PC-9 (cell line): ENCODE measurements at regions of chr2 and their contacts with region 1.

Region 1: DNA sequence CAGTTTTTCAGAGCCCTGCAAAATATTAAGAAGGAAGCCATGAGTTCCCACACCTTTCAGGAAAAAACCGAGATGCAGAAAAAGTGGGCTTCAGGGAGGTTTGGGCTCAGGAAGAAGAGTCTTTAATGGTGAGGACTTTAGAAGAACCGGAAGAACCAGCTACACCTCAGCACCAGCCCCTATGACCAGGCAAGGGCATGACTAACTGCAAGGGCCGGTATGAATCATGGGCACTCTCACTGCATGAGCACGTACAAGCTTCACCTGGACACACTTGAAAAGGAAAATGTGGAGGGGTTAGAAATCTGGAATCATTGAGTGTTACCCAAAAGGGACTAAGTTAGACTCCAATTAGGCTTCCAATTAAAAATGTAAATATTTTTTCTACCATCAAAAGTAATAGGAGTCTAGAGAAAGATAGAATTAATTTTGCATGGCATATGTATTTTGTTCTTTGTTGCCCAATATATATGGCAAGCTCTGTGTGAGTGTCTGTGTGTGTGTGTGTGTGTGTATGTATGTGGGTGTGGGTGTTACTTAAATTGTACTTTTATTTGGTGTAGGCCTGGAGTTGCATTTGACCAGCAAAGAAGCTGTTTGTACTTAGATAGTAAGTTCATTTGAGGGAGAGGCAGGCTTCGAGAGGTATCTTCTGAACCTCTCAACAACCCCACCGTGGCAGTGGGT is 66.5 kb upstream of the THUMPD2 start:
- DNase-seq: peak; percentile 70 to 96
- H3K4me3 ChIP-seq: peak overlapping the region; percentile 7; the same call in 1 of the 2 replicates
- H3K27ac ChIP-seq: peak overlapping the region; percentile 45
- H3K4me1 ChIP-seq: peaks cover 16% of the 10 kb centered on the region
- H3K27me3 ChIP-seq: no peaks in the 10 kb centered on the region
- CTCF ChIP-seq: no peak

Region 2: GRCh38 chr2:39608686-39609441 is 236.7 kb before region 1 on chr2:
- CTCF ChIA-PET with region 1: no interaction called
- POLR2A ChIA-PET with region 1: no interaction called
- intact Hi-C with region 1: no loop called
- DNase-seq: no peak
- H3K4me3 ChIP-seq: no peak overlapping the region
- H3K27ac ChIP-seq: no peak overlapping the region
- H3K4me1 ChIP-seq: no peaks in the 10 kb centered on the region
- H3K27me3 ChIP-seq: no peaks in the 10 kb centered on the region
- CTCF ChIP-seq: no peak

Region 3: DNA sequence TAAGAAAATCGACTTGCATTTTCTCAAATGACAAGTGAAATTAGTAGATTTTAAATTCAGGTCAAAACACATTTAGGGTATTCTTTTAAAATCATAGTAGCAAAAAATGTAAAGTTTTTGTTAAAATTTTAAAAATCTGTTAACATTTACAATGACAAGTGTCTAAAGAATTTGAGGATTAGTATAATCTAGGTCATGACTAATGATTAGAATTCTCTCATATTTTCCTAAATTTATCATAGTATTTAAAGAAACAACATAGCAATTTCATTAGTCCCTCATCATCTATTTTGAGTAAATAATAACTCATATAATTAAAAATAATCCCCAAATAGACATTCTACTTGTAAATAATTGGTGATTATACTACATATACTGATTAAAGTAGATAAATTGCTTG is 90.1 kb before region 1 on chr2:
- CTCF ChIA-PET with region 1: no interaction called
- POLR2A ChIA-PET with region 1: no interaction called
- intact Hi-C with region 1: no loop called
- DNase-seq: no peak
- H3K4me3 ChIP-seq: no peak overlapping the region
- H3K27ac ChIP-seq: no peak overlapping the region
- H3K4me1 ChIP-seq: no peaks in the 10 kb centered on the region
- H3K27me3 ChIP-seq: no peaks in the 10 kb centered on the region
- CTCF ChIP-seq: no peak

Region 4: DNA sequence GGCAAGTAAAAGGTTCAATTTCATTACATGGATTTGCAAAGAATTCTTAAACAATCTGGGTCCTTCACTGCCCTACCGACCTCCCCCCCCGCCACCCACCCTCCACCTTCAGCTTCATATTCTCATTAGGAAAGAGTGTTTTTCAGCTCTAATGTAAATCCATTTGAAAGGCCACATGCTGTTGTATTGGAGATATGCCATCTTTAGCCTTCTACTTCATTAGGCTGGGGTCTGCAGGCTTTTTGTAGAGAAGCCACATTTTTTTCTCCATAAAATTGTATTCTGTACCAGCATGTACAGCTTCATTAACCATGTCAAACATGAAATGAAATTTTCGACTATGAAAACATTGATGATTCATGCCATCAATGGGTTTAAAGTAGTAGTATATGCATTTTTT is 23.7 kb before region 1 on chr2:
- CTCF ChIA-PET with region 1: no interaction called
- POLR2A ChIA-PET with region 1: no interaction called
- intact Hi-C with region 1: no loop called
- DNase-seq: no peak
- H3K4me3 ChIP-seq: no peak overlapping the region
- H3K27ac ChIP-seq: no peak overlapping the region
- H3K4me1 ChIP-seq: no peaks in the 10 kb centered on the region
- H3K27me3 ChIP-seq: no peaks in the 10 kb centered on the region
- CTCF ChIP-seq: no peak

Region 5: DNA sequence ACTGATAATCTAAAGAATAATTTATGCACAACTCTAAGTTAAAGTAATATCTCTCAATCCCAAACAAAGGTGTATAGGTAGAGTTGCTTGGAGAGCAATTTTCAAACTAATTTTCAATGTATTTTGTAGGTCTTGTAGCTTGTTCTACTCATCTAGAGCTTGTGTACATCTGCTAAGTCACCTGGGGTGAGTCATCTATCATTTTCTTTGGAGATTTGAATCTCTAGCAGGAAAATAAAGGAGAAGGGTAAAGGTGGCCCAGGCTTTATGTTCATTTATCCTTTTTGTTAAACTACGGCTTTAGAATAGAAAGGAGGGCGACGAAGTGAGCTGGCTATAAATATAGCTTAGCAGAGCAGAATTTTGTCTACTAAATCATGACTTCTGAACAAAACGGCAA is 10.3 kb after region 1 on chr2:
- CTCF ChIA-PET with region 1: no interaction called
- POLR2A ChIA-PET with region 1: interaction called, 9 read pairs
- intact Hi-C with region 1: loop called (anchors 1 kb)
- DNase-seq: peak in 1 of 2 experiments; percentile 70
- H3K4me3 ChIP-seq: no peak overlapping the region; the same call in 1 of the 2 replicates
- H3K27ac ChIP-seq: peak overlapping the region; percentile 55
- H3K4me1 ChIP-seq: peaks cover 29% of the 10 kb centered on the region
- H3K27me3 ChIP-seq: no peaks in the 10 kb centered on the region
- CTCF ChIP-seq: no peak